WTC11 (cell line): ENCODE measurements at regions of chr15 and their contacts with region 1.

Region 1: GRCh38 chr15:68252925-68253534 is 23.5 kb upstream of the CLN6 start:
- DNase-seq: no peak
- ATAC-seq: peak; percentile 11; the same call in 1 of the 2 replicates
- H3K4me3 Mint-ChIP-seq: no peak overlapping the region
- H3K27ac Mint-ChIP-seq: no peak overlapping the region
- H3K4me1 Mint-ChIP-seq: peaks cover 13% of the 10 kb centered on the region
- H3K27me3 Mint-ChIP-seq: no peaks in the 10 kb centered on the region; the same call in 1 of the 2 replicates
- CTCF ChIP-seq: peak; percentile 61

Region 2: DNA sequence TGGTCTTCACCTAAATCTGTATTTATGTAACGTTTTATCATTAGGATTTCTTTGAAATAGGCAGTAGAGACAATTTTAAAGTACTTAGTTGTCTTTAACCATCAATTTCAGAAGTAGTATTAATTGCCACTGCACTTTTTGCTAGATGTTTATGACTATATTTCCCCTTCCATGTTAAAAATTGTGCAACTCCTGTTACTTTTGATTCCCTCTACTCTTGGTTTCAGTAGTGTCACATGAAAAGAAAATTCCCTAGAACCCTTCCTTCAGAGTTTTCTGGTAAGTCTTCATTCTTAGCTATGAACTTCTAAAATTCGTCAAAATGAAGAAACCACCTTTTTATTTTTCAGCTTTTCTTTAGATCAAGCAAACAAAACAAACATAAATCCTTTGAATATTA is 191.9 kb before region 1 on chr15:
- CTCF ChIA-PET with region 1: no interaction called
- POLR2A ChIA-PET with region 1: no interaction called
- DNase-seq: no peak
- ATAC-seq: no peak
- H3K4me3 Mint-ChIP-seq: no peak overlapping the region
- H3K27ac Mint-ChIP-seq: peak overlapping the region; percentile 28
- H3K4me1 Mint-ChIP-seq: peaks cover 48% of the 10 kb centered on the region
- H3K27me3 Mint-ChIP-seq: no peaks in the 10 kb centered on the region
- CTCF ChIP-seq: no peak

Region 3: DNA sequence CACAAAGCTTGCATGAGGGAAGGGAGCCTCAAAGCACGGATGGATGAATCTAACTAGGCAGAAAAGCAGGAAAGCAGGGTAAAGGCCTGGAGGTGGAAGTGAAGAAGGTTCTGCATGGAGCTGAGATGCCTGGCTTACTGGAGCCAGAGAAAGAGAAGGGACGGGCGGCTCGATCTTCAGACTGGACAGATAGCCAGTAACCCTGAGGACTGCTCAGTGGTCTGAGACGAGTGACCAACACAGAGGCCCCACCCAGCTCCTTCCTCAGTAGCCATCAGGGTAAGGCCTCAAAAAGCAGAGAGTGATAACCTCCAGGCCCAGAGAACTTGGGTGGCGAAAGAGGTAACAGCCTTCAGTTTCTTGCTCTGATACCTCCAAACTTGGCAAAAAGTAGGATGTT is 29.9 kb before region 1 on chr15:
- CTCF ChIA-PET with region 1: no interaction called
- POLR2A ChIA-PET with region 1: no interaction called
- DNase-seq: no peak
- ATAC-seq: no peak
- H3K4me3 Mint-ChIP-seq: no peak overlapping the region
- H3K27ac Mint-ChIP-seq: no peak overlapping the region; the same call in 1 of the 2 replicates
- H3K4me1 Mint-ChIP-seq: peaks cover 12% of the 10 kb centered on the region
- H3K27me3 Mint-ChIP-seq: no peaks in the 10 kb centered on the region; the same call in 1 of the 2 replicates
- CTCF ChIP-seq: no peak

Region 4: GRCh38 chr15:68271854-68272471 is 18.9 kb after region 1 on chr15:
- CTCF ChIA-PET with region 1: interaction called, 20 read pairs
- POLR2A ChIA-PET with region 1: interaction called, 22 read pairs
- DNase-seq: no peak
- ATAC-seq: peak; percentile 78
- H3K4me3 Mint-ChIP-seq: peak overlapping the region; percentile 29; the same call in 1 of the 2 replicates
- H3K27ac Mint-ChIP-seq: peak overlapping the region; percentile 67; the same call in 1 of the 2 replicates
- H3K4me1 Mint-ChIP-seq: peaks cover 27% of the 10 kb centered on the region
- H3K27me3 Mint-ChIP-seq: no peaks in the 10 kb centered on the region
- CTCF ChIP-seq: no peak

Region 5: DNA sequence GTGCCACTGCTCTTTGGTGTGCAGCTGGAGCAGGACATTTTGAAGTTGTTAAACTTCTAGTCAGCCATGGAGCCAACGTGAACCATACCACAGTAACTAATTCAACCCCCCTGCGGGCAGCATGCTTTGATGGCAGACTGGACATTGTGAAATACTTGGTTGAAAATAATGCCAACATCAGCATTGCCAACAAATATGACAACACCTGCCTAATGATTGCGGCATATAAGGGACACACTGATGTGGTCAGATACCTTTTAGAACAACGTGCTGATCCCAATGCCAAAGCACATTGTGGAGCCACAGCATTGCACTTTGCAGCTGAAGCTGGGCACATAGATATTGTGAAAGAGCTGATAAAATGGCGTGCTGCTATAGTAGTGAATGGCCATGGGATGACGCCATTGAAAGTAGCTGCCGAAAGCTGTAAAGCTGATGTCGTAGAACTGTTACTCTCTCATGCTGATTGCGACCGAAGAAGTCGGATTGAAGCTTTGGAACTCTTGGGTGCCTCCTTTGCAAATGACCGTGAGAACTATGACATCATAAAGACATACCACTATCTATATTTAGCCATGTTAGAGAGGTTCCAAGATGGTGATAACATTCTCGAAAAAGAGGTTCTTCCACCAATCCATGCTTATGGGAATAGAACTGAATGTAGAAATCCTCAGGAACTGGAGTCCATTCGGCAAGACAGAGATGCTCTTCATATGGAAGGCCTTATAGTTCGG is 36.8 kb after region 1 on chr15:
- CTCF ChIA-PET with region 1: interaction called, 12 read pairs
- POLR2A ChIA-PET with region 1: no interaction called
- DNase-seq: no peak
- ATAC-seq: no peak
- H3K4me3 Mint-ChIP-seq: no peak overlapping the region
- H3K27ac Mint-ChIP-seq: no peak overlapping the region
- H3K4me1 Mint-ChIP-seq: peaks cover 65% of the 10 kb centered on the region
- H3K27me3 Mint-ChIP-seq: no peaks in the 10 kb centered on the region
- CTCF ChIP-seq: no peak

Region 6: DNA sequence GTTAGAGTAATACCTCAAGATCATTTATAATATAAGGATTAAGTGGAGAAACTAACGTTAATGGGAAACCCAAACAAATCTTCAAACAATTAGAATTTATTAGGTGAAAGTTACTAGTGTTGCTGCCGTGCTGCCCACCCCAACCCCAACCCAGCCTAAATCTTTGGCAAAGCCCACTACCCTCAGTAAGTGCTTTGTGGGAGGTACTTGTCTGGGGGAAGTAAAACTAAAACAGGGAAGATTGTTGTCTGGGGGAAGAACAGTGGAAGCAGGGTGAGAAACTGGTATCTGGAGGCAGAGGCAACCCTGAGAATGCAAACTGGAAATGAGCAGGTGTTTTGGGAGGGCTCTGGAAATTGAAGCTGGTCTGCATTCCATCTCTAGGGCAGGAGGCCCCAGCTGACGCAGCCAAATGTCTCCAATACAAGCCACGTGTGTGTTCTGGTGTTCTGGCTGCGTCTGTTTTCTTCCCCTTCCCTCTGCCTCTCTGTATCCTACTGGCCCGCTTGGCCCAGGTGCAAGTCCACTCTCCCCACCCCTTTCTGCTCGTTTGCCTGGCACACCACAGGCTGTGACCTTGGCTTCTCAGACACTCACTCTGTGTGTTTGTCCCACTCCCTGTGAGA is 57.3 kb after region 1 on chr15:
- CTCF ChIA-PET with region 1: interaction called, 218 read pairs
- POLR2A ChIA-PET with region 1: interaction called, 5 read pairs
- DNase-seq: no peak
- ATAC-seq: no peak
- H3K4me3 Mint-ChIP-seq: no peak overlapping the region
- H3K27ac Mint-ChIP-seq: no peak overlapping the region
- H3K4me1 Mint-ChIP-seq: peaks cover 34% of the 10 kb centered on the region
- H3K27me3 Mint-ChIP-seq: no peaks in the 10 kb centered on the region
- CTCF ChIP-seq: no peak

Region 7: GRCh38 chr15:68537107-68537905 is 284.3 kb after region 1 on chr15:
- CTCF ChIA-PET with region 1: interaction called, 11 read pairs
- POLR2A ChIA-PET with region 1: no interaction called
- DNase-seq: no peak
- ATAC-seq: peak; percentile 73
- H3K4me3 Mint-ChIP-seq: no peak overlapping the region
- H3K27ac Mint-ChIP-seq: no peak overlapping the region
- H3K4me1 Mint-ChIP-seq: no peaks in the 10 kb centered on the region
- H3K27me3 Mint-ChIP-seq: peaks cover 6% of the 10 kb centered on the region
- CTCF ChIP-seq: no peak